ENCODE measurements at regions of chr3 and their contacts with region 1.

Region 1: GRCh38 chr3:66394019-66394752 is 106.6 kb downstream of the LRIG1 start:
- DNase-seq: no peak
- H3K4me3 ChIP-seq: no peak overlapping the region
- CTCF ChIP-seq: no peak

Region 2: DNA sequence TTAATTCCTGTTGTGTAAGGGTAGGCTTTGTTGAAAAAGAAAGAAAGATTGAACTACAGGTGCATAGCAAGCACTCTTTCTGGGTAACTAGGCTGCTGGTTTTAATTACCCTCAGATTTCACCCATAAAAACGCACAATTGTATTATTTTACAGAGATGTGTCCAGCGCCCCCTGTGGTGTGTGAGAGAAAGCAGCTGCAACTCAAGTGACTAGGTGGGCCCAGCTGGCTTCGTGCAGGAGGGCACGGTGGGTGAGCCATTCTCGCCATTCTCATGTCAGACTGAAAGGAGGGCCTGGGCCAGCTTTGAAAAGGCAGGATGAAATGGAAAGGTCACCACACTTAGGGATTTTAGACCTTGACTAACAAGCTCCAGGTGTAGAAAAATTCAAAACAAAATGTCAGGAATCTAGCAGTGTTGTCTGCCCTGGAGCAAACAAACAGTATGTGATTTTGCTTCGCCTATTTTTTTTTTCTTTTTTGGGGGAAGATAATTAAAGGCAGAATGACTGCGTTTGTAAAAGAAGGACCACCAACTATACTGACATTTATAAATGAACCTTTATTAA is 15.8 kb before region 1 on chr3:
- CTCF ChIA-PET with region 1: interaction called, 36 read pairs
- POLR2A ChIA-PET with region 1: no interaction called
- DNase-seq: no peak
- H3K4me3 ChIP-seq: no peak overlapping the region
- CTCF ChIP-seq: peak; percentile 51

Region 3: DNA sequence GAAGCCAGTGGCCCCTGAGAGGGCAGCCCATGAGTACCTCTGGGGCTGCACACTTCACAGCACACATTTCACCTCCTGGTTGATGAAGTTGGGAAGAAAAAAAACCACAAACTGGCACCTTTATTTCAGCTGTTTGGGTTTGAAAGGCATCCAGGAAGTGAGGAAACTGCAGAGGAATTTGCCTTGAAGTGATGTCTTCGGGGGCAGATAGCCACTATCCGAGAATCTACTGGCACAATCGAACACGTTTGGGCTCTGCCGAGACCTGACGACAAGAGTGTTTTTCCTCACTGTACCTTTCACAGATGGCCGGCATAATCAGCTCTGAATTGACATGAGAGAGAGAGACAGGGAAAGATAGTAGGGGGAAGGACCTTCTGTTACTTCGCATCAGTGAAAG is 46.9 kb after region 1 on chr3:
- CTCF ChIA-PET with region 1: no interaction called
- POLR2A ChIA-PET with region 1: no interaction called
- DNase-seq: no peak
- H3K4me3 ChIP-seq: no peak overlapping the region
- CTCF ChIP-seq: no peak

Region 4: DNA sequence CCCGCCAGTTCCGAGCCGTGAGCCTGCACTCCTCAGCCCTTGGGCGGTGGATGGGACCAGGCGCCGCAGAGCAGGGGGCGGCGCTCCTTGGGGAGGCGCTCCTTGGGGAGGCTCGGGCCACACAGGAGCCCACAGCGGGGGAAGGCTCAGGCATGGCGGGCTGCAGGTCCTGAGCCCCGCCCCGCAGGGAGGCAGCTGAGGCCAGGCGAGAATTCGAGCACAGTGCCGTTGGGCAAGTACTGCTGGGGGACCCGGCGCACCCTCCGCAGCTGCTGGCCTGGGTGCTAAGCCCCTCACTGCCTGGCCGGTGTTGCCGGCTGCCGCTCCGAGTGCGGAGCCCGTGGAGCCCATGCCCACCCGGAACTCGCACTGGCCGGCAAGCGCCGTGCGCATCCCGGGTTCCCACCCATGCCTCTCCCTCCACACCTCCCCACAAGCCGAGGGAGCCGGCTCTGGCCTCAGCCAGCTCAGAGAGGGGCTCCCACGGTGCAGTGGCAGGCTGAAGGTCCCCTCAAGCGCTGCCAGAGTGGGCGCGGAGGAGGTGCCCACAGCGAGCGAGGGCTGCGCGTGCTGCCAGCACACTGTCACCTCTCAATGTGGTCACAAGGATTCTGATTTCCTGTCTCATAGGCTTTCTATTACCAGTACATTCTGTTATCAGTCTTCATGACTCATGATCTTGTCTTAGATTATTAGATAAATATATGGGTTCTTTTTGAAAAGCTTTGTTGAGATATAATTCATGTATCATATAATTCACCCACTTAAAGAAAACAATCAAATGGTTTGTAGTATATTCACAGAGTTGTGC is 150.6 kb after region 1 on chr3:
- CTCF ChIA-PET with region 1: no interaction called
- POLR2A ChIA-PET with region 1: no interaction called
- DNase-seq: no peak
- H3K4me3 ChIP-seq: no peak overlapping the region
- CTCF ChIP-seq: no peak